Natural killer cell (primary cell): ENCODE measurements at regions of chr3 and their contacts with region 1.

Region 1: DNA sequence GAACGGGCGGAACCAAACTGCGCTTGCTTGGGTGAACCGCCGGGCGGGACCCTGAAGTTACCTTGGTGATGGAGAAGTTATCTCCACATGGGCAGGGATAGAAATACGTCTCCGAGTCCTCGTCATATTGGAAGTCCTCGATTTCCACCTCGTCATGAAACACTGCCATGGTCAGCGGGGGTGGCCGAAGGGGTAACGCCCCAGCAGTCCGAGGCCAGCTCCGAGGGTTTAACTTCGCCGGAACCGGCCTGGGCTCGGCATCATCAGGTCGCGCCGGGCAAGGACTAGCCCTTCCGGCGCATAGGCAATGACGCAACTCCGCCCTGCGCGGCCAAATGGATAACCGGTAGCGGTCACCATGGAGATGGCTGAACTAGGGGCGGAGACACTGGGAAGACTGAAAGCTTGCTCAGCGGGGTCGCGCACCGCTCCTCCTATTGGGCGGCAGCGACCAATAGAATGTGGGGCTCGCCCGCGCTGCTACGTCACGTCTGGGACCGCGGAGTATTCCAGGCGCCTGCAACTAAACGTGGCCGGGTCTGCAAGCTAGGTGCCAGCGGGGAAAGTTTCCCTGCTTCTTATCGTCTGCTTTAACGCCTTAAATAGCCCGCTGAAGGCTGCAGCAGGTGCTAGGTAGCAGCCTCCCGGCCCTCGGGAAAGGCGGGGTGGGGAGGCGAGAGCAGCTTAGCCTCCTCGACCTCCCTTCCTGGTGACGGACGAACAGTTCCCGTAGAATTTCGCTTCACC is at the starts of genes DPH3 and OXNAD1:
- DNase-seq: peak; percentile 99 to 100
- ATAC-seq: peak; percentile 92 to 98 (median 96)
- H3K4me3 ChIP-seq: peak within 1 kb of the TSS; percentile 99
- H3K4me3 Mint-ChIP-seq: peak within 1 kb of the TSS; percentile 96
- H3K27ac ChIP-seq: peak within 1 kb of the TSS; percentile 99
- H3K27ac Mint-ChIP-seq: peak within 1 kb of the TSS; percentile 89 to 95
- H3K4me1 ChIP-seq: peaks cover 11% of the 10 kb centered on the region
- H3K4me1 Mint-ChIP-seq: peaks cover 6 to 15% of the 10 kb centered on the region in 2 donors
- H3K27me3 ChIP-seq: no peaks in the 10 kb centered on the region
- H3K27me3 Mint-ChIP-seq: no peaks in the 10 kb centered on the region
- CTCF ChIP-seq: no peak
- total RNA-seq, gene DPH3: 20.4 to 27.3 (median 22.8) TPM
- total RNA-seq, gene OXNAD1: 16.7 to 26.1 (median 22.3) TPM

Region 2: DNA sequence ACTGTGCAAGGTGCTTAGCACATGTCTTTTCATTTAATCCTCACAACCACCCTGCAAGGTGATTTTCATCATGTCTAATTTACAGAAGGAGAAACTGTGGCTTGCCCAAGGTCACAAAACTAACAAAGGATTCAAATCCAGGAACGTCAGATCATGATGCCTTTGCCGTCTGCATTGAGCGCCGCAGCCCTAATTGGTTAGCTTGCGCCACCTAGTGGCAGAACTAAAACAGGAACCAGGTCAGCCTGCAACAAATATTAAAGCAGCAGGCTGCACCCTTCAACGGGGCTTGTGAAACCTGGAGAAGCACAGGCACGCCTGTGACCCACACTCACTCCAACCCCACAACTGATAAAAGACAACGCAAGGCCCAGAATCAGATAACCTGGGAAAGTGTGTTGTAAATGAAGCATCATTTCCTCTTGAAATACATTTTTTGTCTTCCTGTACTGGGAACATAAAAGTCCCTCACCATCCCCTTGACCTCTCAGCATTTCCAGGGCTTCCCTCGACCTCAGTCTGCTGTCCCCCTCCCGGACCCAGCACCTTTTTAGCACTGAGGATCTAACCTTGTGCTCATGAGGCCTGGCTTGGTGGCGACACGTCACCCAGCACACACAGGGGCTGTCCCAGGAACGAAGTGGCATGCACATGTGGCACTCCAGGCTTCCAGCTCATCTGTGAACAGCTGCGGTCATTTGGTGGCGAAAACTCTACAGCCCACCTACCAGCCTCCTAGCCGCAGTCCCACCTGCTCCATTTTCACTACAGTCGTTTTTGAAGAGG is 17.4 kb before region 1 on chr3:
- intact Hi-C with region 1: no loop called
- DNase-seq: peak; percentile 64 to 91
- ATAC-seq: peak; percentile 90 to 98 (median 97)
- H3K4me3 ChIP-seq: no peak overlapping the region
- H3K4me3 Mint-ChIP-seq: no peak overlapping the region
- H3K27ac ChIP-seq: no peak overlapping the region
- H3K27ac Mint-ChIP-seq: no peak overlapping the region
- H3K4me1 ChIP-seq: peaks cover 5% of the 10 kb centered on the region
- H3K4me1 Mint-ChIP-seq: peaks cover 0 to 11% of the 10 kb centered on the region in 2 donors
- H3K27me3 ChIP-seq: no peaks in the 10 kb centered on the region
- H3K27me3 Mint-ChIP-seq: no peaks in the 10 kb centered on the region
- CTCF ChIP-seq: peak; percentile 89

Region 3: GRCh38 chr3:16319307-16319706 is 54.4 kb after region 1 on chr3:
- intact Hi-C with region 1: loop called (anchors 2 kb)
- DNase-seq: peak in 1 of 2 donors; percentile 92
- ATAC-seq: peak; percentile 71 to 81 (median 74)
- H3K4me3 ChIP-seq: no peak overlapping the region
- H3K4me3 Mint-ChIP-seq: no peak overlapping the region
- H3K27ac ChIP-seq: no peak overlapping the region
- H3K27ac Mint-ChIP-seq: peak overlapping the region; percentile 64 to 76
- H3K4me1 ChIP-seq: peaks cover 46% of the 10 kb centered on the region
- H3K4me1 Mint-ChIP-seq: peaks cover 45 to 47% of the 10 kb centered on the region in 2 donors
- H3K27me3 ChIP-seq: no peaks in the 10 kb centered on the region
- H3K27me3 Mint-ChIP-seq: no peaks in the 10 kb centered on the region
- CTCF ChIP-seq: peak; percentile 41

Region 4: DNA sequence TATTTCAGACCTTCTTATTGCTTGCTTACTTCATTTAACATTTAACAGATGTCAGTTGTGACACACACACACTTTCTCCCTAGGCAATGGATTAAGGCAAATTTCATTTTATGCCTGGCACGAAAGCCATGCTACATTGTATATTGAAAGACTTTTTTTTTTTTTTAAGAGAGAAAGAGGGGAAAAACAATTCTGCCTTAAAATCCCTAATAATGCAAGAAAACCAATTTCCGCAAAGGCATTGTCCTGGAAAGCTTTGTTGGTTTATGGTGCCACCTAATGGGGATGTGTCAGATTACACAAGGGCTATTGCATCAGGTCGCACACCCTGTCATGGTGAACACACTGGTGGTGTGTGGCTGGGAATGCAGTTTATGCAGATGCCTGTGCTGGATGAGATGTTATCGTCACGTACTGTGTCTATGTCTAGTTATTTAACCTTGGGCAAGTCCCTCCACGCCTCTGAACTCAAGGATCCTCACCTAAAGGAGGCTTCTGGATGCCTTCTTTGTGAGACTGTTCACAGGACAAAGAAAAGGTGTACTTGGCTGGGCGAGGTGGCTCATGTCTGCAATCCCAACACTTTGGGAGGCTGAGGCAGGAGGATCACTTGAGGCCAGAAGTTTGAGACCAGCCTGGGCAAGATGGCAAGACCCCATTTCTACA is 285.9 kb after region 1 on chr3:
- intact Hi-C with region 1: loop called (anchors 1 kb)
- DNase-seq: peak; percentile 56 to 91
- ATAC-seq: peak; percentile 86 to 90 (median 88)
- H3K4me3 ChIP-seq: no peak overlapping the region
- H3K4me3 Mint-ChIP-seq: peak overlapping the region; percentile 40
- H3K27ac ChIP-seq: no peak overlapping the region
- H3K27ac Mint-ChIP-seq: peak overlapping the region; percentile 31 to 69
- H3K4me1 ChIP-seq: peaks cover 17% of the 10 kb centered on the region
- H3K4me1 Mint-ChIP-seq: peaks cover 34 to 40% of the 10 kb centered on the region in 2 donors
- H3K27me3 ChIP-seq: no peaks in the 10 kb centered on the region
- H3K27me3 Mint-ChIP-seq: peaks cover 0 to 9% of the 10 kb centered on the region in 2 donors
- CTCF ChIP-seq: peak; percentile 93

Region 5: DNA sequence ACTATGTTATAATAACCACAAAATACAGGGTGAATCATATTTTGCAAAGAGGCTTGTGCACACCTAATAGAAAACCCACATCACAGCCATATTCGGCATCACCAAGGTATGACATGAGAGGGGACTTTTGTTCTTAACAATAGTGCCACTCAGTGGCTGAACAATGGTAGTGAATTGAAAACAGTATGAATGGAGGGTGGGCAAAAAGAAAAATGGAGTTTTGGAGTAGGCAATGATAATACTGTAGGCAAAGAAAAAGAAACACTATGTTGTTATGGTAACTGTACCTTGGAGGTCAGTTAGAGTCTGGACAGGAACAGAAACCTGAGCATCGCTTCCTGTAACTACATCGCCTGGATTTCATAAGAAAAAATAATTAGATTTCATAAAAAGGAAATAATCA is 968.5 kb after region 1 on chr3:
- intact Hi-C with region 1: loop called (anchors 10 kb)
- DNase-seq: peak in 1 of 2 donors; percentile 79
- ATAC-seq: peak; percentile 88 to 100 (median 99)
- H3K4me3 ChIP-seq: no peak overlapping the region
- H3K4me3 Mint-ChIP-seq: no peak overlapping the region
- H3K27ac ChIP-seq: no peak overlapping the region
- H3K27ac Mint-ChIP-seq: no peak overlapping the region
- H3K4me1 ChIP-seq: no peaks in the 10 kb centered on the region
- H3K4me1 Mint-ChIP-seq: peaks cover 0 to 9% of the 10 kb centered on the region in 2 donors
- H3K27me3 ChIP-seq: no peaks in the 10 kb centered on the region
- H3K27me3 Mint-ChIP-seq: no peaks in the 10 kb centered on the region
- CTCF ChIP-seq: peak; percentile 86